Activated CD4-positive, alpha-beta T cell treated with anti-CD3 and anti-CD28 coated beads for 36 hours (primary cell): ENCODE measurements at regions of chrX and their contacts with region 1.

Region 1: DNA sequence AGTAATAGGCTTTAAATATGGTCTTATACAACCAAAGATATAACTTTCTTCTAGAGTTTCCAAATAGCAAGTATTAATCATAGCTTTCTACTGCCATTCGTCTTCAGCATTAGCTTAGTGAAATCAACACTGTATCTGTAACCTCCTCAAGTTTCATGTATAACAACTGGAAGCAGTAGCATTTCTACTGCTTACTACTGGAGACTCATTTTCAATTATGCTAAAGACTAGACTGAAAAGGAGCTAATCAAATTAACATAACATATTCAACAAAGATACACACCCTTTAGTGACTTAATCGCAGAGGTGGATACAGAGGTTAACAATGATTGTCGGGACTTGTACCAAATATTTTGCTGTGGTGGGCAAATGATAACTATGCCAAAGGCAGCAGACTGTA is 344.2 kb upstream of the TEX13C start:
- DNase-seq: no peak
- ATAC-seq: no peak
- H3K4me3 Mint-ChIP-seq: no peak overlapping the region
- H3K27ac Mint-ChIP-seq: no peak overlapping the region
- H3K4me1 Mint-ChIP-seq: no peaks in the 10 kb centered on the region
- H3K27me3 Mint-ChIP-seq: no peaks in the 10 kb centered on the region

Region 2: GRCh38 chrX:125029131-125029530 is 53.7 kb after region 1 on chrX:
- CTCF ChIA-PET with region 1: no interaction called
- POLR2A ChIA-PET with region 1: no interaction called
- intact Hi-C with region 1: loop called in 1 of 2 experiments (anchors 5 kb)
- DNase-seq: no peak
- ATAC-seq: no peak
- H3K4me3 Mint-ChIP-seq: no peak overlapping the region
- H3K27ac Mint-ChIP-seq: no peak overlapping the region
- H3K4me1 Mint-ChIP-seq: peaks cover 10% of the 10 kb centered on the region
- H3K27me3 Mint-ChIP-seq: no peaks in the 10 kb centered on the region